ENCODE measurements at regions of chr18 and their contacts with region 1.

Region 1: DNA sequence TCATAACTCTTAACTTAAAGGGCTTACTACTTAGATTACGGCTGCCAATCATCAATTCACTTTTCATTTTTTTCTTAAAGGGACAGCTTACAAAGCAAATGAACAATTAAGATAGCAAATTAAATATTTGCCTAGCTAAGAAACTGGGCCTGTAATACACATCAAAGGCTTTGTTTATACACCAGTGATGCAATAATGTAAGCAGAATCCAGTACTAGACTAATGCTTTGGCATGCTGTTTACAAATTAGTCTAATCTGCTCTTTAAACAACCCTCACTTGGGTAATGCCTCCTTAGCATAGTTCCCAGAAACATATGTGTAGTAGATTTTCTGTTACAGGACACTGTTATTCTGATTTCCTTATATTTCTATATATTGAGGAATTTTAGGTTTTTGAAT is 105.8 kb downstream of the ARHGAP28 start:
- DNase-seq: peak; percentile 76
- ATAC-seq: peak; percentile 97
- H3K4me3 ChIP-seq: no peak overlapping the region
- H3K27ac ChIP-seq: no peak overlapping the region
- H3K4me1 ChIP-seq: peaks cover 11% of the 10 kb centered on the region; the same call in 1 of the 2 replicates
- H3K27me3 ChIP-seq: no peaks in the 10 kb centered on the region
- CTCF ChIP-seq: no peak
- POLR2A ChIP-seq: no peak
- RAD21 ChIP-seq: no peak

Region 2: GRCh38 chr18:6465281-6465680 is 370.1 kb before region 1 on chr18:
- CTCF ChIA-PET with region 1: no interaction called
- POLR2A ChIA-PET with region 1: no interaction called
- dilution Hi-C with region 1: no loop called
- in situ Hi-C with region 1: no loop called
- intact Hi-C with region 1: no loop called
- DNase-seq: no peak
- ATAC-seq: no peak
- H3K4me3 ChIP-seq: no peak overlapping the region
- H3K27ac ChIP-seq: no peak overlapping the region
- H3K4me1 ChIP-seq: no peaks in the 10 kb centered on the region
- H3K27me3 ChIP-seq: no peaks in the 10 kb centered on the region
- CTCF ChIP-seq: no peak
- POLR2A ChIP-seq: no peak
- RAD21 ChIP-seq: no peak

Region 3: GRCh38 chr18:6747646-6748045 is 87.7 kb before region 1 on chr18:
- CTCF ChIA-PET with region 1: no interaction called
- POLR2A ChIA-PET with region 1: no interaction called
- dilution Hi-C with region 1: no loop called
- in situ Hi-C with region 1: no loop called
- intact Hi-C with region 1: loop called (anchors 5 kb)
- DNase-seq: peak; percentile 97
- ATAC-seq: peak; percentile 85
- H3K4me3 ChIP-seq: no peak overlapping the region
- H3K27ac ChIP-seq: peak overlapping the region; percentile 76; the same call in 1 of the 2 replicates
- H3K4me1 ChIP-seq: peaks cover 17% of the 10 kb centered on the region
- H3K27me3 ChIP-seq: no peaks in the 10 kb centered on the region
- CTCF ChIP-seq: no peak
- POLR2A ChIP-seq: no peak
- RAD21 ChIP-seq: no peak

Region 4: GRCh38 chr18:6819312-6819711 is 16.0 kb before region 1 on chr18:
- CTCF ChIA-PET with region 1: no interaction called
- POLR2A ChIA-PET with region 1: no interaction called
- dilution Hi-C with region 1: no loop called
- in situ Hi-C with region 1: no loop called
- intact Hi-C with region 1: loop called (anchors 2 kb)
- DNase-seq: no peak
- ATAC-seq: no peak; the same call in 1 of the 2 replicates
- H3K4me3 ChIP-seq: no peak overlapping the region
- H3K27ac ChIP-seq: no peak overlapping the region
- H3K4me1 ChIP-seq: peaks cover 7% of the 10 kb centered on the region
- H3K27me3 ChIP-seq: no peaks in the 10 kb centered on the region
- CTCF ChIP-seq: no peak
- POLR2A ChIP-seq: no peak
- RAD21 ChIP-seq: no peak

Measured in IMR-90 (cell line).